Dorsolateral prefrontal cortex (tissue), 120 donors: ENCODE measurements at regions of chr7 and their contacts with region 1.

Region 1: DNA sequence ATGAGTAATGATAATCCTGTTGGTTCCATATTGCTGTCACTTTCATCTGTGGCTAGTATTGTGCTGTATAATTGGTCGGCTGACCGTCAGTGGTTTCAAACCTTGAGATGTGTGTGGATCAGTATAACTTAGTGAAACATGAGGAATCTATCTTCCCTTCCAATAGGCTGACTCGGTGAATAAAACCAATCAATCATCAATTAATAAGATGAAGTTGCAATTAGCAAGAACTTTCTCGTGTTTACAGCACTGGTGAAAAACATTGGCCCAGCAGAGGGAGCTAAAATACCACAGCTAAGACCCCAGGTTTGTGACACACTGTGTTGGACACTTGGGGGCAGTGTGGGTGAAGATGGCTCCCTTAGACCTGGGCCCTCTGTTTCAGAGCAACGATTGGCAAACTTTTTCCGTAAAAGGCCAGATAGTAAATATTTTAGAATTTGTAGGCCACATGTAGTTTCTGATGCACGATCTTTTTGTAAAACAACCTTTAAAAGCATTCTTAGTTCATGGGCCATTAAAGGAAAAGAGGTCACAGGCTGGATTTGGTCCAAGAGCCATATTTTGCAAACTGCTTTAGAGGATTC is 47.8 kb downstream of the STRA8 start:
- DNase-seq: peak; percentile 43 to 93 (median 80)
- H3K4me3 ChIP-seq: peak overlapping the region in 32 of 59 donors; percentile 4 to 45 (median 29)
- H3K27ac ChIP-seq: peak overlapping the region in 5 of 59 donors; percentile 11 to 70 (median 16)
- H3K27me3 ChIP-seq: no peaks in the 10 kb centered on the region
- CTCF ChIP-seq: peak; percentile 95 to 100 (median 99)

Region 2: GRCh38 chr7:135558337-135558767 is 276.9 kb after region 1 on chr7:
- intact Hi-C with region 1: loop called (anchors 2 to 5 kb)
- DNase-seq: peak in 8 of 10 donors; percentile 49 to 71 (median 59)
- H3K4me3 ChIP-seq: peak overlapping the region; percentile 55 to 98 (median 89)
- H3K27ac ChIP-seq: peak overlapping the region; percentile 13 to 100 (median 98)
- H3K27me3 ChIP-seq: no peaks in the 10 kb centered on the region
- CTCF ChIP-seq: peak in 55 of 56 donors; percentile 20 to 72 (median 55)

Region 3: DNA sequence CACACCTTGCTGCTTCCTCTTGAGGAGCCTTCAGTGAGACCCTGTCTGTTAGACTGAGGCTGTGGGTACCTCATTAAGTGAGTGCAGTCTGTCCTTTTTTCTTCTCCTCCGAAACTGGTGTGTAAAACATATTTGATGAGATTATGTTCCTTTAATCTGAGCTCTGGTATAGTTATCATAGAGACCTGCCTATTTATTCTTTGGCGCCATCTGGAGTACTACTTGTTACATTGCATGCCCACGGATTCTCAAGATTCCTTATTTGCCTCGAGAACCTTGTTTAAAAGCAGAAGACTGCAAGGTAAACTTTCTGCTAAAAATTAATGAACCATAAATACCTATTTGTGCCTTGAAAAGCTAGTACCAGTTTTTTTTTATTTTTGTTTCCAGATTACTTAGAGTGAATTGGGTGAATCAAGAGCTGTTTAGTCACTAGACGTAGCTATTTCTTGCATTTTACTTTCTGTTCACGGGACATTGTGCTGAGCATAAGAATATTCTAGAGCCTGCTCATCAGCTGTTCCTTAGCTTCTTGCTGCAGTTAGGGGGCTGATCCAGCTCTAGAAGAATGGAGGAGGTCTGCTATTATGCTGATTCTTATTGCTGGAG is 363.9 kb after region 1 on chr7:
- intact Hi-C with region 1: loop called (anchors 2 to 5 kb)
- DNase-seq: peak in 1 of 10 donors; percentile 41
- H3K4me3 ChIP-seq: peak overlapping the region in 8 of 59 donors; percentile 7 to 41 (median 21)
- H3K27ac ChIP-seq: peak overlapping the region in 16 of 59 donors; percentile 0 to 55 (median 29)
- H3K27me3 ChIP-seq: no peaks in the 10 kb centered on the region
- CTCF ChIP-seq: peak; percentile 62 to 89 (median 75)

Region 4: GRCh38 chr7:136009488-136010079 is 728.1 kb after region 1 on chr7:
- intact Hi-C with region 1: loop called in 1 of 2 experiments (anchors 10 kb)
- DNase-seq: no peak
- H3K4me3 ChIP-seq: no peak overlapping the region
- H3K27ac ChIP-seq: no peak overlapping the region
- H3K27me3 ChIP-seq: no peaks in the 10 kb centered on the region
- CTCF ChIP-seq: peak; percentile 70 to 96 (median 85)